ENCODE measurements at regions of chr11 and their contacts with region 1.

Region 1: DNA sequence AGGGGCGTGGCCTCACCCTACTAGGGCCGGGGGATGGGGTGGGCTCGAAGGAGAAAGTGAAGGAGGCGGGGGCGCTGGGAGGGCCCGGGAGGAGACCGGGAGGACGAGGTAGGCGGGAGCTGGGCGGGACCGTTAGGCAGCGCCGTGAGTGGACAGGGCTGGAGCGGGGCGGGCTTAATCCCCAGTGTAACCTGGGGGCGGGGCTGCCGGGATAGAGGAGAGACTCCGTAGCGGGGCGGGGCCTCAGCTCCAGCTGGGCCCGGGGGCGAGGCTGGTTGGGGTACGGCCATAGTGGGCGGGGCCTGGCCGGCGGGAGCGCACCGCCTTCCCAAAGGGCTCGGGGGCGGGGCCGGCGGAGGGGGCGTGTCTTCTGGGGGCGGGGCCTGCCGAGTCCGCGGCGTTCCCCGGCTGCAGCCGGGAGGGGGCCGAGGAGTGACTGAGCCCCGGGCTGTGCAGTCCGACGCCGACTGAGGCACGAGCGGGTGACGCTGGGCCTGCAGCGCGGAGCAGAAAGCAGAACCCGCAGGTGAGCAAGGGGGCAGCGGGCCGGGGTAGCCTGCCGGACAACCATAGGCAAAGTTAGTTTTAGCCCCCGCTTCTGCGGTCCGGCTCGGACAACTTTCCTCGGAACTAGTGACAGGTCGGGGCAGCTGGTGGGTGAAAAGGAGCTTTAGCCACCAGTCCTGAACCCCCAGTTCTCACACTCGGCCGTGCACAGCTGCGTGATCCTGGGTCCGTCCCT is at the start of gene CD82:
- DNase-seq: peak; percentile 100
- H3K4me3 ChIP-seq: peak within 1 kb of the TSS; percentile 36 to 59 (median 56)
- H3K27ac ChIP-seq: peak within 1 kb of the TSS; percentile 93 to 98 (median 96)
- H3K4me1 ChIP-seq: peaks cover 0 to 57% (median 56%) of the 10 kb centered on the region in 4 donors
- H3K27me3 ChIP-seq: no peaks in the 10 kb centered on the region
- CTCF ChIP-seq: peak in 1 of 4 experiments; percentile 36
- EP300 ChIP-seq: no peak
- POLR2A ChIP-seq: peak; percentile 37 to 61
- total RNA-seq, gene CD82: 8.7 to 23.3 (median 16.8) TPM

Region 2: DNA sequence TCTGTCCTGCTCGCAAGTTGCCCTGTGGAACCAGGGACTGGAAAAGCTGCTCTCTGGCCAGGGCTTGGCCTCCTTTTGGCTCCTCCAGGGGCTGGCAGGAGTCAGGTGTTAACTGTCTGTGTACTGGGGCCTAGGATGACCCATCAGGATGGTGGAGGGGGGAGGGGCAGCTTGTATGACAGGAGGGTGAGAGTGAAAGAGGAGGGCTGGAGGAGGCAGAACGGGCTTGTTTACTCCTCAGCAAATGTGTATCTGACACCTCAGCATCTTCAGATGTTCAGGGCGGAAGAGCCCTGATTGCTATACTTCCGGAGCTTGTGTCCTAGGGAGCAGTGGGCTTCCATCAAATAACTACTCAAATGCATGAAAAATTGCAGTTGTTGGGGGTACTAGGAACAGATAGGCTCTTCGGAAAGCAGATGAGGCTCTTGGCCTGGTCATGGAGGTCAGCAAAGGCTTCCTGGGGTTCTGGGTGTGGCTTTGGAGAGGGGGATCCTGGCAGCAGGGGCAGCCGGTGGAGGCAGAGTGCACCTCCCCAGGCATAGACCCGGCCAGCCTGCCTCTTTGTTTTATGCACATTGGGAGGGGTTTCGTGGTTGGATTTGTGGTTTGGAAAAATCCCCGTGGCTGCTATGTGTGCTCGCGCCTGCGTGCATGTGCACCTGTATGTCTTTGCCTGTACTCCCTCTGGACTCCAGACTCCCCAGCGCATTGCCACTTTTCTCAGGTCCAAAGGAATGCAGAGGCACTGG is 31.3 kb after region 1 on chr11:
- intact Hi-C with region 1: loop called (anchors 1 kb)
- DNase-seq: no peak
- H3K4me3 ChIP-seq: no peak overlapping the region
- H3K27ac ChIP-seq: peak overlapping the region; percentile 64 to 71 (median 68)
- H3K4me1 ChIP-seq: peaks cover 0 to 71% (median 64%) of the 10 kb centered on the region in 4 donors
- H3K27me3 ChIP-seq: no peaks in the 10 kb centered on the region
- CTCF ChIP-seq: no peak
- EP300 ChIP-seq: no peak
- POLR2A ChIP-seq: no peak

Region 3: GRCh38 chr11:44727373-44728287 is 162.2 kb after region 1 on chr11:
- intact Hi-C with region 1: loop called (anchors 5 kb)
- DNase-seq: peak; percentile 93
- H3K4me3 ChIP-seq: peak overlapping the region; percentile 72 to 90 (median 82)
- H3K27ac ChIP-seq: peak overlapping the region; percentile 87 to 95 (median 89)
- H3K4me1 ChIP-seq: peaks cover 4 to 56% (median 51%) of the 10 kb centered on the region in 4 donors
- H3K27me3 ChIP-seq: no peaks in the 10 kb centered on the region
- CTCF ChIP-seq: peak; percentile 86 to 96 (median 92)
- EP300 ChIP-seq: no peak
- POLR2A ChIP-seq: peak in 1 of 2 donors; percentile 12

Region 4: GRCh38 chr11:44899959-44900358 is 334.6 kb after region 1 on chr11:
- intact Hi-C with region 1: loop called (anchors 5 kb)
- DNase-seq: no peak
- H3K4me3 ChIP-seq: no peak overlapping the region
- H3K27ac ChIP-seq: no peak overlapping the region
- H3K4me1 ChIP-seq: peaks cover 0 to 19% (median 5%) of the 10 kb centered on the region in 4 donors
- H3K27me3 ChIP-seq: no peaks in the 10 kb centered on the region
- CTCF ChIP-seq: no peak
- EP300 ChIP-seq: no peak
- POLR2A ChIP-seq: no peak

Measured in sigmoid colon (tissue), 7 donors.